HepG2 (cell line): ENCODE measurements at regions of chr16 and their contacts with region 1.

Region 1: DNA sequence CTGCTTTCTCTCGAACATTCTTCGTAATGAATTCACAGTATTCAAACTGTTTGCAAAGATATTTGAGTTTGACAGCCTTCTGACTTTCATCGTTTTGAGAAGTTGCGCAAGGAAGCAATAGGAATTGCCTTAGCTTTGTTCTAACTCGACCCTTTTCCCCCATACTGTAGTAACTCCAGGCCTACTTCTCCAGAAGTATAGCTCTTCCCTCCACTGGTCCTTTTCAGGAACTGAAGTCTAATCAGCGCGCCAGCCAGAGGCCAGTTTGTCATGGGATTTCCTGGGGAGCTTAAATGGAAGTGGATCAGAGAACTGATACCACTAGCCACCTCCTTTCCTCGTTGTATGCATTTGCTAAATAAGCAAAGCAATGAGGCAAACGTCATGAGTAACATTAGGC is 27.9 kb downstream of the CDR2 start:
- DNase-seq: no peak
- ATAC-seq: 0 out of 3 replicates have a peak, but pooled peaks have one; percentile 17
- H3K4me3 ChIP-seq: no peak overlapping the region
- H3K27ac ChIP-seq: no peak overlapping the region
- H3K4me1 ChIP-seq: no peaks in the 10 kb centered on the region
- H3K27me3 ChIP-seq: no peaks in the 10 kb centered on the region
- CTCF ChIP-seq: no peak
- EP300 ChIP-seq: no peak
- POLR2A ChIP-seq: no peak
- RAD21 ChIP-seq: no peak

Region 2: GRCh38 chr16:21158208-21159110 is 1188.0 kb before region 1 on chr16 and contains the start of gene LDAF1:
- CTCF ChIA-PET with region 1: no interaction called
- POLR2A ChIA-PET with region 1: no interaction called
- in situ Hi-C with region 1: loop called (anchors 25 kb)
- intact Hi-C with region 1: no loop called
- DNase-seq: peak; percentile 33
- ATAC-seq: peak; percentile 93
- H3K4me3 ChIP-seq: peak within 1 kb of the TSS; percentile 79 to 88 (median 80)
- H3K27ac ChIP-seq: no peak within 1 kb of the TSS
- H3K4me1 ChIP-seq: peaks cover 33% of the 10 kb centered on the region
- H3K27me3 ChIP-seq: peaks cover 2 to 18% of the 10 kb centered on the region in 2 experiments; a peak in 2 of 5 replicates
- CTCF ChIP-seq: peak; percentile 40; the same call in 1 of the 2 replicates
- EP300 ChIP-seq: peak in 1 of 2 experiments; percentile 32; a peak in 2 of 4 replicates
- POLR2A ChIP-seq: no peak
- RAD21 ChIP-seq: peak; percentile 48; the same call in 1 of the 2 replicates
- total RNA-seq, gene LDAF1: 6.3 and 8.3 TPM in 2 replicates

Region 3: GRCh38 chr16:22424161-22424937 is 77.9 kb after region 1 on chr16:
- CTCF ChIA-PET with region 1: no interaction called
- POLR2A ChIA-PET with region 1: no interaction called
- in situ Hi-C with region 1: no loop called
- intact Hi-C with region 1: no loop called
- DNase-seq: no peak
- ATAC-seq: no peak
- H3K4me3 ChIP-seq: no peak overlapping the region
- H3K27ac ChIP-seq: no peak overlapping the region
- H3K4me1 ChIP-seq: no peaks in the 10 kb centered on the region
- H3K27me3 ChIP-seq: no peaks in the 10 kb centered on the region
- CTCF ChIP-seq: no peak
- EP300 ChIP-seq: no peak
- POLR2A ChIP-seq: no peak
- RAD21 ChIP-seq: no peak